ENCODE measurements at regions of chr21 and their contacts with region 1.

Region 1: GRCh38 chr21:14864211-14865021 is 200.4 kb downstream of the NRIP1 start:
- DNase-seq: peak; percentile 62 to 92 (median 83)

Region 2: DNA sequence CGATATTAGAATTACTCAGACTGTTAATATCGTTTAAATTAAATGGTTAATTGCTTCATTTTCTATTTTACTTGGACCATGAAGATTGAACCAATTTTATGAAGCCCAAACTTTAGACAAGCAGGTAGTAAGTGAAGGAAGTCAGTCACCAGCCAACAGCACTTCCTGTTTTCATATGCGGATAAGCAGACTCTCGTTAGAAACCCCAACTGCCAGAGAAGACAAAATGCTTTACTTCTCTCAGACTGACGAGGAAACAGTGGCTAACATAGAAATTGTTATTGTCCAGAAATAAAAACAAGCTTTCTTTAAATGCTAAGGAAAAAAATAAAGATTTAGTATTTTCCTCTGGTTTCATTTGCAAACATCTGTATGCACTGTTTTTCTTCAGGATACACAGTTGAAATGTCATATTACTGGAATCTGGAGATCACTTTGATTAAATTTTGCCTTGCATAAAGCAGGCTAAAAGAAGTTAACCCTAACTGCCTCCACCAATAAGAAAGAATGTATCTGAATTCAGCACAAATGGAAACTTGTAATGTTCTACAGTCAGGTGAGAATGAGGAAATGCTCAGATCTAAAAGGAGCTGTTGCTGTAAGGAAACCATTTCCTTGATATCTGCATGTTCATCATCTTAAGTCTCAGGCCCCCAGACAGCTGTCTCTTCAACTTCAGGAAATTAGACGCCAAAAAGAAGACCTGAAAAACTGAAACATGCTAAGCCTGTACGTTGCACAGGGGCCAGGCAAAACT is 188.5 kb before region 1 on chr21:
- intact Hi-C with region 1: no loop called
- DNase-seq: peak in 1 of 42 donors; percentile 13

Region 3: GRCh38 chr21:15064576-15065391 is 200.4 kb after region 1 on chr21 and contains the start of gene NRIP1:
- intact Hi-C with region 1: loop called (anchors 10 kb)
- DNase-seq: peak; percentile 63 to 96 (median 88)

Region 4: DNA sequence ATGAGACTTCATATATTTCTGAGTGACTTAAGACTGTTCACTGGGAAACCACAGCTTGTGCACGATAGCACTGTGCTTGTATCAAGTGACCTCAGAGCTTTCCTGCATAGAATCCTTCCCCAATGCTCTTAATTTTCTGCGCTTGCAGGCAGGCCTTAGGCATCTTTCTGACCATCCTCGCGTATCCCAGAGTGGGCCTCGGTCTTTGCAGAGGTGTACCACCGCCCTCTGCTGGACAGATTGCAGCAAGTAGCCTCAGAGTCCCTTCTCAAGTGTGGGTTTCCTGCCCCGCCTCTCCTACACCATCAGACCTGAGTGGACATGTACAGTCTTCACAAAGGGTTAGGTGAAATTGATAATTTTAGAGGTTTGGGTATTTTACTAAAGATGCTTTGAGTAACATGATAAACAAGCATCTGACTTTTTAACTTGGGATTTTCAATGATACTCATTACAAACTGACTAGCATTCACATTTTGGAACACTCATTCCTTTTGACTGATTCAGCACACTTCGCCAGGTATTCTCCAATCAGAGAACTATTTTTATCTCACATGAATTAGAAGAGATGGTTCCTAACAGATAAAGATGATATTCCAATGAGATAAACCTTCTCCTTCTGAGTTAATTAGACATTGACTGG is 618.8 kb after region 1 on chr21:
- intact Hi-C with region 1: loop called (anchors 5 kb)
- DNase-seq: peak; percentile 77 to 96 (median 91)

Measured in head of caudate nucleus (tissue), 42 donors.